Natural killer cell (primary cell): ENCODE measurements at regions of chr17 and their contacts with region 1.

Region 1: DNA sequence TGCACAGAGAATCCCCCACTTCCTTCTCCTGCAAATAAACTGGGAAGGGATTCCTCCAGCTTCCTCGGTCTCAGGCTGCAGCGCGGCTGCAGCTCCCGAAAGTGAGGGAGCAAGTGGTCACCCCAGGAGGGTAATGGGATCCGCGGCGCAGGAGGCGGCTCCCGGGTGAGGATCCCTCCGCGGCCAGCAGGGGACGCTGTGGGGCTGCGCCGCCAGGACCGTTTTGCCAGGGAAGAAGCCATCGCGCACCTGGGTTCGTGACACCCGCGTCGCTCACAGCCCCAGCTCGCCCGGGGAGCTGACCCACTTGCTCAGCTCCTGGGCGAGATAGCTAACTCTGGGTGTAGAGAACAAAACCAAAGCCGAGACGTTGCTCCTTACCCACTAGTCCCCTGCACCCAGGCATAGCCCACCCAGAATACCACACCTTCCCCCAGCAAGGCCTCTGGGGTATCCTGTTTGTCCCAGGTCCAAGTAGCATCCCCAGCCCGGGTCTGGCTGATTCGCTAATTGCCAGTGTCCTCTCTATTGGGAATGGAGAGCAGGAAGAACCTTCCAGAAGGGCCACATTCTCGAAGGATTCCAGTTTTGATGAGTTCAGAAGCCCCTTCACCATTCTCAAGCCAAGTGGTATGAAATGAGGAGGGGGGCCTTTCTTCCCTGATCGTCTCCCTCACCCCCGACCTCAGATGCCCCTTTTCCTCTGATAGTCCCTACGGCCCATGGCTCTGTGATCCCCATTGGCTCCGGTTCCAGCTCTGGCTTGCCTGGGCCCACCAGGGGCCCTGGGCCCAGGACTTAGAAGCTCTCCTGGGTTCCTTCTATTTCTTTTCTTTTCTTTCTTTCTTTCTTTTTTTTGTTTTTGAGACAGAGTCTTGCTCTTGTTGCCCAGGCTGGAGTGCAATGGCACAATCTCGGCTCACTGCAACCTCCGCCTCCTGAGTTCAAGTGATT is 14.1 kb downstream of the CYGB start:
- DNase-seq: peak; percentile 80 to 92
- ATAC-seq: peak; percentile 74 to 84 (median 79)
- H3K4me3 ChIP-seq: no peak overlapping the region
- H3K4me3 Mint-ChIP-seq: peak overlapping the region; percentile 35
- H3K27ac ChIP-seq: no peak overlapping the region
- H3K27ac Mint-ChIP-seq: peak overlapping the region in 1 of 2 donors; percentile 70
- H3K4me1 ChIP-seq: peaks cover 32% of the 10 kb centered on the region
- H3K4me1 Mint-ChIP-seq: peaks cover 25 to 44% of the 10 kb centered on the region in 2 donors
- H3K27me3 ChIP-seq: no peaks in the 10 kb centered on the region
- H3K27me3 Mint-ChIP-seq: no peaks in the 10 kb centered on the region
- CTCF ChIP-seq: peak; percentile 100

Region 2: DNA sequence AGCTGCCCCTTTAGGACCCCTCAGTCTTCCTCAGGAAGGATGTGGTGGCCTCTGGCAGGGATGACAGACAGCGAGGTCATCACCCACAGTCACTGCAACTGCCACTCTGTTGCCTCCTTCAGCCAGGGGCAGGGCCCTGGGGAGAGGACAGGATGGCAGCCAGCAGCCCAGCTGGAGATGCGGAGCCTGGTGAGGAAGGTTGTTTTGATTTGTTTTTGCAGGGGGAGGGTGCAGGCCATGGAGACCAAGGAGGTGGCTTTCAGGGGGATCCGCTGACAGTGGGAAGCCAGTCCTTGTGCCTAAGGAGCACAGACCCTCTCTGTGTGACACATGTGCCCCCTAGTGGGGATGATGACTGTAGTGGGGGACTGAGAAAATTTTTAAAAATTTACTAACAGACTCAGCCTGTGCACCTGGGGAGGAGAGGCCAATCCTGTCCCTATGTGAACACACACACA is 23.9 kb after region 1 on chr17:
- intact Hi-C with region 1: loop called (anchors 1 kb)
- DNase-seq: peak; percentile 36 to 82
- ATAC-seq: peak; percentile 66 to 92 (median 81)
- H3K4me3 ChIP-seq: no peak overlapping the region
- H3K4me3 Mint-ChIP-seq: no peak overlapping the region
- H3K27ac ChIP-seq: no peak overlapping the region
- H3K27ac Mint-ChIP-seq: no peak overlapping the region
- H3K4me1 ChIP-seq: peaks cover 43% of the 10 kb centered on the region
- H3K4me1 Mint-ChIP-seq: peaks cover 0 to 21% of the 10 kb centered on the region in 2 donors
- H3K27me3 ChIP-seq: no peaks in the 10 kb centered on the region
- H3K27me3 Mint-ChIP-seq: peaks cover 0 to 3% of the 10 kb centered on the region in 2 donors
- CTCF ChIP-seq: peak; percentile 60

Region 3: DNA sequence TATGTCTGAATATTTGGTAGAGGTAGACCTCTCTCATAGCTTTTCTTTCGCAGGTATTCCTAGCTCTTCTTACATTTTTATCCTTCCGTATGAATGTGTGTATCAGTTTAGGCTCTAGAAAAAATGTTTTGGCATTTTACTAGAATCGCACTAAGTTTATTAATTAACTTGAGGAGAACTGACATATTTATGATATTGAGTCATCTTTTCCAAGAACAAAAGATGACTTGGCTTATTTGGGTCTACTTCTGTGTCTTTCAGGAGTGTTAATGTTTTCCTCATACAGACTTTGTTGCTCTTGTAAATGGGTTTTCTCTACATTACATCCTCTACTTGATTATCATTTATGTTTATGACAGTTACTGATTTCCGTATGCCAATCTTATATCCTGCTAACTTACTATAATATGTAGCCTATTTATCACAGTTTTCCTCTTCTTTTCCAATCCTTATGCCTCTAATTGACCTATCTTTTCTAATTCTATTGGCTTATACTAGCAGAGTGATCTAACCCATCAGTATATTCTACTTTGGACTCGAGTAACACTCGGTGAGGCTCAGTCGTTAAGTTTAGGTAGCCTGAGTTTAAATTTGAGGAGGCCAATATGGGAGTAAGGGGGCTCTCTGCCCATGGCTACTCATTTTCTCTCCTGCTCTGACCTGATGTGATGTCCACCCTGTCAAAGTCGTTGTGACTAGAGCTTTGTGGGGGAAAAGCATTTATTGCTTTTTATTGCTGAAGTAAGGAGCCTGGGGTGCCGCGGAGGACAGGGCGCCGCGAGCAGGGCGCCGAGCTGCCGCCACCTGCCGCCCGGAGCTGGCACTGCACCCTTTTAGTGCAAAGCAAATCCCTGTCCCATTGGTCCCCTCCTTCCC is 100.1 kb after region 1 on chr17:
- intact Hi-C with region 1: loop called (anchors 1 kb)
- DNase-seq: peak; percentile 73 to 86
- ATAC-seq: peak; percentile 94 to 100 (median 99)
- H3K4me3 ChIP-seq: no peak overlapping the region
- H3K4me3 Mint-ChIP-seq: no peak overlapping the region
- H3K27ac ChIP-seq: no peak overlapping the region
- H3K27ac Mint-ChIP-seq: peak overlapping the region in 1 of 2 donors; percentile 23
- H3K4me1 ChIP-seq: no peaks in the 10 kb centered on the region
- H3K4me1 Mint-ChIP-seq: peaks cover 4 to 7% of the 10 kb centered on the region in 2 donors
- H3K27me3 ChIP-seq: no peaks in the 10 kb centered on the region
- H3K27me3 Mint-ChIP-seq: peaks cover 10 to 15% of the 10 kb centered on the region in 2 donors
- CTCF ChIP-seq: peak; percentile 96

Region 4: GRCh38 chr17:76681222-76682137 is 158.1 kb after region 1 on chr17:
- intact Hi-C with region 1: loop called (anchors 1 kb)
- DNase-seq: peak; percentile 56 to 86
- ATAC-seq: peak; percentile 63 to 72 (median 70)
- H3K4me3 ChIP-seq: no peak overlapping the region
- H3K4me3 Mint-ChIP-seq: peak overlapping the region; percentile 85
- H3K27ac ChIP-seq: peak overlapping the region; percentile 39
- H3K27ac Mint-ChIP-seq: peak overlapping the region; percentile 66 to 82
- H3K4me1 ChIP-seq: peaks cover 61% of the 10 kb centered on the region
- H3K4me1 Mint-ChIP-seq: peaks cover 18 to 21% of the 10 kb centered on the region in 2 donors
- H3K27me3 ChIP-seq: no peaks in the 10 kb centered on the region
- H3K27me3 Mint-ChIP-seq: no peaks in the 10 kb centered on the region
- CTCF ChIP-seq: peak; percentile 52